ENCODE measurements at regions of chr15 and their contacts with region 1.

Region 1: DNA sequence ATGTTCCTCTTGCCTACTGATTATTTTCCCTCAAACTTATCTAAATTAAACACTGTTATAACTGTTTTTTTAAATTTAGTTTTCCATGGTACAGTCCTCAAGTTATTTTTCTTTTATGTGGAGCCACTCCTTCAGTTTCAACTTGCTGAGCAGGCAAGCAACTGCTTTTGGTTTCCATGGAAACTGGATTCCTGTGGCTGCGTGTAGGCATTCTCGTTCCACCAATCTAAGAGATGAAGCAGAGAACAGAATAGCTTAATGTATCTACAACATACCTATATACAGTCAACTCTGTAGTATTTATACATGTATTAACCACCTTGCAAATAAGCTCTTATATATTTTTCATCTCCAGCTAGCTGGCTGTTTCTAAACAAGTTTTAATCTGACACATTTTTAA is 25.8 kb upstream of the ANXA2 start:
- DNase-seq: peak; percentile 64
- H3K4me3 ChIP-seq: no peak overlapping the region
- H3K27ac ChIP-seq: peak overlapping the region; percentile 32
- H3K4me1 ChIP-seq: peaks cover 45% of the 10 kb centered on the region
- H3K27me3 ChIP-seq: no peaks in the 10 kb centered on the region
- CTCF ChIP-seq: no peak
- POLR2A ChIP-seq: no peak

Region 2: DNA sequence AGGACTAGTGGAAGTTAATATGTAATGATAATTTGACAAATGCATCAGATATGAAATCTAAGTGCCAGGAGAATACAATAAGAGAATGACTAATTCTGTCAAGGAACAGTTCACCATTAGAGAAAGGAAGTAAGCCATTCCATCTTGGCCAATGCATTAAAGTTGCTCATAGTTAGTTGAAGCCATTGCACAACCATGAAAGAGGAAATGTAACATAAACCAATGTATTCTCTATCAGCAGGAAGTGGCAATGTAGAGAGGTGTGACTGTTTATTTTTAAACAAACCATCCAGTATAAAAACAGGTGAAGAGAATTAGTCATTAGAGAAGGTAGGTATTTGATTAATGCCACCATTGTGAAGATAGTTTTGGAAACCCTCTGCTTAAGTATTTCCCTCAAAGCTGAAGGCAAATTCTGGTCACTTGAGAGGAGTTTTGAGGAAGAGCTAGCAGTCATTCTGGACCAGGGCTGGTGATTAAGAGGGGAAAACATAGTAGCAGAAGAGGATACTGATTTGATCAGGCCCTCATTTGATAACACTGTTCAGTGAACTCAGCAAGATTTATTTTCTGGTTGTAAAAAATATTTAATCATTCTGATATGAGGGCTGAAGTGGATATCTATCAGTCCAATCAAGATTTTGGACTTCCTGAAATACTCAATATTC is 15.0 kb before region 1 on chr15:
- CTCF ChIA-PET with region 1: interaction called, 4 read pairs
- POLR2A ChIA-PET with region 1: interaction called, 5 read pairs
- dilution Hi-C with region 1: no loop called
- intact Hi-C with region 1: loop called (anchors 1 kb)
- DNase-seq: peak; percentile 78
- H3K4me3 ChIP-seq: no peak overlapping the region
- H3K27ac ChIP-seq: peak overlapping the region; percentile 62
- H3K4me1 ChIP-seq: peaks cover 27% of the 10 kb centered on the region
- H3K27me3 ChIP-seq: no peaks in the 10 kb centered on the region
- CTCF ChIP-seq: no peak
- POLR2A ChIP-seq: no peak

Region 3: DNA sequence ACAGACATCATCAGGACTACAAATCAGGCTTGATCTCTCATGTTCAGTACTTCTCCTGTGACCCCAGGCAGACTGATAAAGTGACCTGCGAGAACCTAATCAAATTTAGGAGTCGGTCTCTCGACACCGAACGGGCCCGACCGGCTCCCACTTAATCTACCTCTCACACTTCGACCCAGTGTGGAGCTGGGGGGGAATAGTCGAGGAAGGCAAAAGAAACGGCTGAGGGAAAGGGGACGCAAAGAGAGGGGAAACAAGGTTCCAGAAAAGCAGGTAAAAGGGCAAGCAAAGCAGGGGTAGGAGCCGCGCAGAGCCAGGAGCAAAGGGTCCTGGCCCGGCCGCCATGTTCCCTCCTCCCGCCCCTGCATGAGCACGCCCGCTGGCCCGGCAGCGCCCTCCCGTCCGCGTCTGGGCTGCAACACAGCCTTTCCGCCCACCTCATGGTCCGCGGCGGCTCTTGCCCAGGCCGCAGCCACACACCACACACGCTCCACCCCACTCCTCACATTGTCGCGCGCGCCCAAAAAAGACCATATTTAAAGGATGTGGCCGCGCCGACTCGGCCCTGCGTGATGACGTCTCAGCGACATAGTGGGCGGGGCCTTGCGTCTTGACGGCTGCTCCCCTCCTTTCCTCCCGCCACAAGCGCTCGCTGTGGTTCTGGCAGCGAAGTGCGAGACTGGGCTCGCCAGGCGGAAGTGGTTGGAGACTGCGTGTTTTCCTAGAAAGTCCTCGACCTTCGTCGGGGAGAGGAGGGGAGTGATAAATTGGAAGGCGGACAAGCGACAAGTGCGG is 55.2 kb after region 1 on chr15 and contains the start of gene ICE2:
- CTCF ChIA-PET with region 1: no interaction called
- POLR2A ChIA-PET with region 1: interaction called, 3 read pairs
- dilution Hi-C with region 1: no loop called
- intact Hi-C with region 1: loop called (anchors 1 kb)
- DNase-seq: peak; percentile 97
- H3K4me3 ChIP-seq: peak within 1 kb of the TSS; percentile 69 to 94 (median 77)
- H3K27ac ChIP-seq: peak within 1 kb of the TSS; percentile 89
- H3K4me1 ChIP-seq: peaks cover 26% of the 10 kb centered on the region
- H3K27me3 ChIP-seq: no peaks in the 10 kb centered on the region
- CTCF ChIP-seq: no peak
- POLR2A ChIP-seq: peak; percentile 98
- total RNA-seq, gene ICE2: 50.9 and 57.0 TPM in 2 replicates

Region 4: GRCh38 chr15:60994963-60995475 is 571.5 kb after region 1 on chr15:
- CTCF ChIA-PET with region 1: no interaction called
- POLR2A ChIA-PET with region 1: no interaction called
- dilution Hi-C with region 1: no loop called
- intact Hi-C with region 1: no loop called
- DNase-seq: peak; percentile 47
- H3K4me3 ChIP-seq: no peak overlapping the region
- H3K27ac ChIP-seq: no peak overlapping the region
- H3K4me1 ChIP-seq: peaks cover 11% of the 10 kb centered on the region
- H3K27me3 ChIP-seq: no peaks in the 10 kb centered on the region
- CTCF ChIP-seq: no peak
- POLR2A ChIP-seq: no peak